Activated CD4-positive, alpha-beta memory T cell treated with anti-CD3 and anti-CD28 coated beads for 36 hours (primary cell): ENCODE measurements at regions of chr3 and their contacts with region 1.

Region 1: GRCh38 chr3:150097588-150097890 is 126.8 kb upstream of the PFN2 start:
- DNase-seq: no peak
- H3K4me3 Mint-ChIP-seq: no peak overlapping the region
- H3K27ac Mint-ChIP-seq: no peak overlapping the region
- H3K4me1 Mint-ChIP-seq: peaks cover 7% of the 10 kb centered on the region
- H3K27me3 Mint-ChIP-seq: peaks cover 2% of the 10 kb centered on the region

Region 2: DNA sequence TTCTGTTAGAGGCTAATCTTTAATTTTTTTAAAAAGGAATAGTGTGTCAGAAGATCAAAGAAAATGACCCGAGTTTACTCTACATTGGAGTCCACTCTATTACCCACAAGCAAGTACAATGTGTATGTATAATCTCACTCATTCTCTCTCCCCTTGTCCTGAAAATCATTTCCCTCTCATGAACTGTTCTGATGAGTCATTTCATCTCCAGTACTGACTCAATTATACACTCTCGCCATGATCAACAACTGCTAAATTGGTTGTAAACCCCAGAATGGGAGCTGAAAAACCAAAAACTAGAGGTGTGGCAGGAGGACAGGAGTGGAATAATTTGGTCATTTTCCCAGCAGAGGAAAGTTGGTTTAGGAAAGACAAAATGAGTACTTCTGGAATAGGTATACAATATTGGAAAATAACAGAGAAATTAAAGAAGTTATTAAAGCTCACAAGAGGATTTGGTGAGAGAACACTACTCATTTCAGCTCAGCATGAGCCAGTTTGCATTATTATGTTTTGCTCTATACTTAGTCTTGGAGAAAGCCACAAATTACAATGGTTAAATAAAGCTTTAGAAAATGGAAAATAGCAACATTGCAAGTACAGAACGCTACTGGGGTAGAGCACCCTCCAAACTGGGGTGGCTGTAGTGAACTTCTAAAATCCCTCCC is 17.5 kb after region 1 on chr3:
- CTCF ChIA-PET with region 1: no interaction called
- POLR2A ChIA-PET with region 1: no interaction called
- intact Hi-C with region 1: loop called (anchors 1 kb)
- DNase-seq: no peak
- H3K4me3 Mint-ChIP-seq: no peak overlapping the region
- H3K27ac Mint-ChIP-seq: no peak overlapping the region
- H3K4me1 Mint-ChIP-seq: peaks cover 3% of the 10 kb centered on the region
- H3K27me3 Mint-ChIP-seq: peaks cover 22% of the 10 kb centered on the region

Region 3: DNA sequence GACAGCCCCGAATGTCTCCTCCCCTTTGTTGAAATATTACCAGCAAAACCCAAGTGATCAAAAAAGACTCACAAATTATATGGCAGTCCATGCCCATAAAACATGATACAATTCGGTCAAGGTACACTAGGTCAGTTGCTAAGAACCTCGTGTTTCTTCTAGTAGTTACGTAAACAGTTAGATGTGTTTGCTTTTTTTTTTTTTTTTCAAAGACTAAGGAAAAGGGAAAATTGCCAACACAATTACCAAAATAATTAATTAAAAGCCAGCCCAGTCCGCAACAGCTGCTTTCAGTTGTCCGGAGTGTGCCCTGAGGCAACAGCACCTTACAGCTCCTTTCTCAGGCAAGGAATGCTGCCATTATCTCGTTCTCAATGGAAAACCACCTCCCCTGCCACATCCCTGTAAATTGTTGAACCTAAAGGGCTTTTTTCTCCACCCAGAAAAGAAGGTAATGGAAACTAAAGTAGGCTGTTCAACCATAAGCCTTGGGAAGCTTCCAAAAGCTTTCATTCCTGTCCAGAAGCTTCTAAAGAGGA is 181.4 kb after region 1 on chr3:
- CTCF ChIA-PET with region 1: no interaction called
- POLR2A ChIA-PET with region 1: no interaction called
- intact Hi-C with region 1: no loop called
- DNase-seq: no peak
- H3K4me3 Mint-ChIP-seq: no peak overlapping the region
- H3K27ac Mint-ChIP-seq: no peak overlapping the region
- H3K4me1 Mint-ChIP-seq: no peaks in the 10 kb centered on the region
- H3K27me3 Mint-ChIP-seq: peaks cover 5% of the 10 kb centered on the region